ENCODE measurements at regions of chr6 and their contacts with region 1.

Region 1: GRCh38 chr6:37018198-37019064 is 13.0 kb downstream of the FGD2 start:
- DNase-seq: peak; percentile 88
- ATAC-seq: peak; percentile 96
- H3K4me3 ChIP-seq: no peak overlapping the region
- H3K4me3 Mint-ChIP-seq: peak overlapping the region; percentile 19
- H3K27ac ChIP-seq: peak overlapping the region in 1 of 2 donors; percentile 49
- H3K27ac Mint-ChIP-seq: peak overlapping the region; percentile 76
- H3K4me1 ChIP-seq: peaks cover 14 to 21% of the 10 kb centered on the region in 2 donors
- H3K4me1 Mint-ChIP-seq: peaks cover 23% of the 10 kb centered on the region
- H3K27me3 ChIP-seq: no peaks in the 10 kb centered on the region
- H3K27me3 Mint-ChIP-seq: no peaks in the 10 kb centered on the region
- CTCF ChIP-seq: peak; percentile 90

Region 2: DNA sequence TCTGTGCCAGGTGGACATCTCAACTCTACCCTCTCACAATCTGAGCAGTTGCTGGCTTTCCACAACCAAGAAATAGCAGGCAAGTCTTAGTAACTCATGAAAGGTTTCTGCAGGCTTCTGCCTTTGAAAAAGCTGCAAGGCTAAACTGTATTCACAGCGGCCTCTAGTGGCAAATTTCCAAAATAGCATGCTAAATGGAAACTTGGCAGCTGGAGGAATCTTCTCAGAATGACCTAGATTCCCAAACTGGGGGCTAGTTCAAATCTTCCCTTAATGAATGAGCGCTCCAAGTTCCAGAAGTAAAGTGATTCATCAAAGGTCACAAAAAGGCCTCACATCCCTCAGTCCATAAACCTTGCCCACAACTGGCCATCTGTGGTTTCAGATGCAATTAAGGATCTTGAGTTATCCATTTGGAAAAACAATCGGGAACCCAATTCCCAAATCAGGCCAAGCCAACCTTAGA is 167.2 kb before region 1 on chr6:
- CTCF ChIA-PET with region 1: interaction called, 10 read pairs
- POLR2A ChIA-PET with region 1: no interaction called
- intact Hi-C with region 1: no loop called
- DNase-seq: peak; percentile 69
- ATAC-seq: peak; percentile 43
- H3K4me3 ChIP-seq: no peak overlapping the region
- H3K4me3 Mint-ChIP-seq: no peak overlapping the region
- H3K27ac ChIP-seq: no peak overlapping the region
- H3K27ac Mint-ChIP-seq: no peak overlapping the region
- H3K4me1 ChIP-seq: peaks cover 0 to 8% of the 10 kb centered on the region in 2 donors
- H3K4me1 Mint-ChIP-seq: peaks cover 8% of the 10 kb centered on the region
- H3K27me3 ChIP-seq: peaks cover 0 to 11% (median 5%) of the 10 kb centered on the region in 4 experiments
- H3K27me3 Mint-ChIP-seq: peaks cover 3% of the 10 kb centered on the region
- CTCF ChIP-seq: peak; percentile 83

Region 3: GRCh38 chr6:36897609-36898008 is 120.8 kb before region 1 on chr6:
- CTCF ChIA-PET with region 1: interaction called, 13 read pairs
- POLR2A ChIA-PET with region 1: no interaction called
- intact Hi-C with region 1: no loop called
- DNase-seq: peak; percentile 25
- ATAC-seq: no peak
- H3K4me3 ChIP-seq: no peak overlapping the region
- H3K4me3 Mint-ChIP-seq: no peak overlapping the region
- H3K27ac ChIP-seq: no peak overlapping the region
- H3K27ac Mint-ChIP-seq: no peak overlapping the region
- H3K4me1 ChIP-seq: no peaks in the 10 kb centered on the region
- H3K4me1 Mint-ChIP-seq: no peaks in the 10 kb centered on the region
- H3K27me3 ChIP-seq: no peaks in the 10 kb centered on the region
- H3K27me3 Mint-ChIP-seq: no peaks in the 10 kb centered on the region
- CTCF ChIP-seq: no peak

Region 4: DNA sequence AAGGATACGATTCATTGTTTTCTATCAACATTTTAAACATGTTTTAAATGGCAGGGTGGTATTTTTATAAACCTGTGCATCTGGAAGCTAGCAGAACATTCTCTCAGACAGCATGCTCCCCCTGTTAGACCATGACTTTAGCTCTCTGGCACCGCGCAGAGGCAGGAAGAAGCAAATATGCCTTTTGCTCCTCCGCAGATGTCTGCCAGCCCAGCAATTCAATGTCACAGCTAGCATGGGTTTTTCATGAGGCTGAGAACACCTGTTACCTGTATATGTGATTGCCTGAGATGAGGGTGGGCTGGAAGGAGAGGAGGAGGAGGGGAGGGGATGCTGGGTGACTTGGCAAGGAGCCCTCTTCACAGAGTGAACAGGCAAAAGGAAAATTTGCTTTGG is 39.1 kb before region 1 on chr6:
- CTCF ChIA-PET with region 1: interaction called, 223 read pairs
- POLR2A ChIA-PET with region 1: interaction called, 18 read pairs
- intact Hi-C with region 1: loop called (anchors 1 kb)
- DNase-seq: peak; percentile 42
- ATAC-seq: no peak
- H3K4me3 ChIP-seq: no peak overlapping the region
- H3K4me3 Mint-ChIP-seq: no peak overlapping the region
- H3K27ac ChIP-seq: no peak overlapping the region
- H3K27ac Mint-ChIP-seq: peak overlapping the region; percentile 47
- H3K4me1 ChIP-seq: peaks cover 16 to 17% of the 10 kb centered on the region in 2 donors
- H3K4me1 Mint-ChIP-seq: peaks cover 37% of the 10 kb centered on the region
- H3K27me3 ChIP-seq: no peaks in the 10 kb centered on the region
- H3K27me3 Mint-ChIP-seq: no peaks in the 10 kb centered on the region
- CTCF ChIP-seq: no peak

Region 5: GRCh38 chr6:37029249-37029971 is 11.0 kb after region 1 on chr6:
- CTCF ChIA-PET with region 1: interaction called, 88 read pairs
- POLR2A ChIA-PET with region 1: interaction called, 3 read pairs
- intact Hi-C with region 1: no loop called
- DNase-seq: peak; percentile 69
- ATAC-seq: peak; percentile 78
- H3K4me3 ChIP-seq: no peak overlapping the region
- H3K4me3 Mint-ChIP-seq: no peak overlapping the region
- H3K27ac ChIP-seq: no peak overlapping the region
- H3K27ac Mint-ChIP-seq: peak overlapping the region; percentile 84
- H3K4me1 ChIP-seq: peaks cover 0 to 8% of the 10 kb centered on the region in 2 donors
- H3K4me1 Mint-ChIP-seq: peaks cover 24% of the 10 kb centered on the region
- H3K27me3 ChIP-seq: no peaks in the 10 kb centered on the region
- H3K27me3 Mint-ChIP-seq: no peaks in the 10 kb centered on the region
- CTCF ChIP-seq: peak; percentile 80

Region 6: DNA sequence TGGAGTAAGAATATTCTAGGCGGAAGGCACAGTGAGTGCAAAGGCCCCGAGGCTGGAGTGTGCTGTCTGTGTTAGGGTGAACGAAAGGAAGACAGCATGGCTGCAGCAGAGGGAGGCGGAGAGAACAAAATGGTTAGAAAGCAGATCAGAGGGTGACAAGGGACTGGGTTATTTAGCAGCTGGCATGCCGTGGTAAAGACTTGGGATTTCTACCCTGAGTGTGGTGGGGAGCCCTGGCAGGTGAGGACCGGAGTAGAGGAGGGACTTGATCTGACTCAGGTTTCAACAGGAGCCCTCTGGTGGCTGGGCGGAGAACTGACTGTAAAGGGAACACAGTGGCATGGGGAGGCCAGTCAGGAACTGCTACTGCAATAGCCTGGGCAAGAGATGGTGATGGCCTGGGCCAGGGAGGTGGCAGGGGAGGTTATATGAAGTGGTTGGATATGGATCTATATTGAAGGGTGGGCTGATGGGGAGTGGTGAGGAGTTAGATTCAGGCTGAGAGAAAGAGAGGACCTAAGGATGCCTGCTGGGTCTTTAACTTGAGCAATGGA is 189.5 kb after region 1 on chr6:
- CTCF ChIA-PET with region 1: interaction called, 587 read pairs
- POLR2A ChIA-PET with region 1: no interaction called
- intact Hi-C with region 1: loop called (anchors 1 kb)
- DNase-seq: peak; percentile 88
- ATAC-seq: peak; percentile 95
- H3K4me3 ChIP-seq: no peak overlapping the region
- H3K4me3 Mint-ChIP-seq: no peak overlapping the region
- H3K27ac ChIP-seq: no peak overlapping the region
- H3K27ac Mint-ChIP-seq: peak overlapping the region; percentile 3
- H3K4me1 ChIP-seq: peaks cover 4 to 12% of the 10 kb centered on the region in 2 donors
- H3K4me1 Mint-ChIP-seq: peaks cover 14% of the 10 kb centered on the region
- H3K27me3 ChIP-seq: peaks cover 0 to 4% (median 0%) of the 10 kb centered on the region in 4 experiments
- H3K27me3 Mint-ChIP-seq: no peaks in the 10 kb centered on the region
- CTCF ChIP-seq: peak; percentile 85

Measured in B cell (primary cell).